Calu3 (cell line): ENCODE measurements at regions of chr6 and their contacts with region 1.

Region 1: DNA sequence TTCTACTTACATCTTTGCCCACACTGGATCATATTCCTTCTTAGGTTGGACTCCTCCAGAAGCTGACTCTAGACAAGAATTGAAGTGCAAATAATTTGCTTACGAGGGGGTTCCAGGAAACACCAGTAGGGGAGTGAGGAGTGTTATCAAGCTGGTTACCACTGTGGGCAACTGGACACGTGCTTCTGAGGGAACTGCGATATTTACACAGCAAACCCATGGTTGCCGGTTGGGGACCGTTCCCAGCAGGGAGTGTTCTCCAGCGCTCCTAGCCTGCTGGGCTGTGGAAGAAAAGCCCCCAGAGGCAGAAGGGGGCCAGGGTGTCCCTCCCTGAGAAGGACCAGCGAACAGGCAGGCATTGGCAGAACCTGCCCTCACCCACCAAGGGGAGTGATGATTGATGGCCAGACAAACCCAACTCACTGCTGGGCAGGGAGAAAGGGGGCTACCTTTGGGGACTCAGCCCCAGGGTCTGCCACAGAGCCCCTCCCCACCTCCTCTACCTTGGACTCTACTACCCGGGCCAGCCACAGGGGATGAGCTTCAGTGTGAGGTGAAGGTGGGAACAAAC is 21.8 kb downstream of the MDFI start:
- DNase-seq: no peak
- H3K4me3 Mint-ChIP-seq: no peak overlapping the region
- H3K27ac Mint-ChIP-seq: no peak overlapping the region
- H3K4me1 Mint-ChIP-seq: no peaks in the 10 kb centered on the region
- H3K27me3 Mint-ChIP-seq: peaks cover 81% of the 10 kb centered on the region
- CTCF ChIP-seq: no peak

Region 2: GRCh38 chr6:41690541-41691345 is 30.7 kb after region 1 on chr6:
- CTCF ChIA-PET with region 1: interaction called, 11 read pairs
- intact Hi-C with region 1: no loop called
- DNase-seq: no peak
- H3K4me3 Mint-ChIP-seq: no peak overlapping the region
- H3K27ac Mint-ChIP-seq: no peak overlapping the region
- H3K4me1 Mint-ChIP-seq: peaks cover 18% of the 10 kb centered on the region
- H3K27me3 Mint-ChIP-seq: no peaks in the 10 kb centered on the region
- CTCF ChIP-seq: no peak